H1 (cell line): ENCODE measurements at regions of chr1 and their contacts with region 1.

Region 1: DNA sequence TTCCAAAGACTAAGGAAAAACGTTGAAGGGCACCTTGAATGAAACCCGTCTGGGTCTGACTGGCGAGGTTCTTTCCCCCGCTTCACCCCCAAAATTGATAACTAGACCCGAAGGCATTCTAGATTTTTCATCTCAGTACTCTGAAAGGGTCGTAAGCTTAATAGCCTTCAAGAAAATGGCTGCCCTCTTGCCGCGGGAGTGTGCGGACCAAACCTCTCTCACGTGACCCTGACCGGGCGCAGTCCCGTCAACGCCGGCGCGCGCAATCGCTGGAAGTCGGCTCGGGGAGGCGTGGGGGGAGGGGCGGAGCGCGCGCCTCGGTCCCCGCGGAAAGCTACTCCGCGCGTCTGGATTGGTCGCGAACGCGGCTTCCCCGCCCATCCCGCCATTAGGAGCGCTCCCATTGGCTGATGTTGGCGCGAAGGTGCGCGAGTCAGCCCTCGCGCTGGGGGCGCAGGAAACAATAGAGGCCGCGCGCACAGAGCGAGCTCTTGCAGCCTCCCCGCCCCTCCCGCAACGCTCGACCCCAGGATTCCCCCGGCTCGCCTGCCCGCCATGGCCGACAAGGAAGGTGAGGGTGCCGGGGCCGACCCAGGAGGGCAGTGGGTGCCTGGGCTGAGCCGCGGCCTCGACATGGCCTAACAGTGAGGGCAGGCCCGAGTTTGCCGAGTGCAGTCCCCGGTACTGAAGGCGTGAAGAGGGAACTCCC is at the start of gene RBBP4:
- DNase-seq: peak; percentile 94 to 99
- H3K4me3 ChIP-seq: peak within 1 kb of the TSS; percentile 99
- H3K27ac ChIP-seq: peak within 1 kb of the TSS; percentile 99
- H3K4me1 ChIP-seq: peaks cover 0 to 5% (median 1%) of the 10 kb centered on the region in 4 experiments; a peak in 4 of 7 replicates
- H3K27me3 ChIP-seq: no peaks in the 10 kb centered on the region
- CTCF ChIP-seq: no peak
- EP300 ChIP-seq: no peak
- POLR2A ChIP-seq: no peak; a peak in 1 of 3 replicates
- RAD21 ChIP-seq: no peak
- total RNA-seq, gene RBBP4: 397 and 402 TPM in 2 replicates

Region 2: GRCh38 chr1:32394141-32394889 is 256.6 kb before region 1 on chr1 and contains the start of gene BSDC1:
- CTCF ChIA-PET with region 1: no interaction called
- POLR2A ChIA-PET with region 1: interaction called, 13 read pairs
- DNase-seq: peak; percentile 97 to 98
- H3K4me3 ChIP-seq: peak within 1 kb of the TSS; percentile 79 to 100 (median 94)
- H3K27ac ChIP-seq: peak within 1 kb of the TSS; percentile 95
- H3K4me1 ChIP-seq: peaks cover 0 to 8% (median 3%) of the 10 kb centered on the region in 4 experiments; a peak in 4 of 7 replicates
- H3K27me3 ChIP-seq: no peaks in the 10 kb centered on the region
- CTCF ChIP-seq: no peak
- EP300 ChIP-seq: no peak
- POLR2A ChIP-seq: peak; percentile 77 to 97
- RAD21 ChIP-seq: no peak
- total RNA-seq, gene BSDC1: 40.7 and 42.9 TPM in 2 replicates

Region 3: GRCh38 chr1:32538887-32539583 is 111.9 kb before region 1 on chr1 and contains the start of gene ZBTB8A:
- CTCF ChIA-PET with region 1: no interaction called
- POLR2A ChIA-PET with region 1: interaction called, 25 read pairs
- DNase-seq: peak; percentile 15 to 73
- H3K4me3 ChIP-seq: peak within 1 kb of the TSS; percentile 74 to 95 (median 78)
- H3K27ac ChIP-seq: peak within 1 kb of the TSS; percentile 83; the same call in 1 of the 2 replicates
- H3K4me1 ChIP-seq: peaks cover 0 to 2% (median 1%) of the 10 kb centered on the region in 4 experiments; a peak in 5 of 7 replicates
- H3K27me3 ChIP-seq: no peaks in the 10 kb centered on the region; a peak in 1 of 7 replicates
- CTCF ChIP-seq: no peak
- EP300 ChIP-seq: no peak
- POLR2A ChIP-seq: peak in 1 of 2 experiments; percentile 58; a peak in 1 of 3 replicates
- RAD21 ChIP-seq: no peak
- total RNA-seq, gene ZBTB8A: 8.9 and 10.4 TPM in 2 replicates

Region 4: GRCh38 chr1:32622806-32623681 is 27.9 kb before region 1 on chr1:
- CTCF ChIA-PET with region 1: no interaction called
- POLR2A ChIA-PET with region 1: interaction called, 12 read pairs
- DNase-seq: no peak
- H3K4me3 ChIP-seq: no peak overlapping the region
- H3K27ac ChIP-seq: no peak overlapping the region
- H3K4me1 ChIP-seq: no peaks in the 10 kb centered on the region
- H3K27me3 ChIP-seq: no peaks in the 10 kb centered on the region
- CTCF ChIP-seq: no peak
- EP300 ChIP-seq: no peak
- POLR2A ChIP-seq: no peak
- RAD21 ChIP-seq: no peak

Region 5: GRCh38 chr1:32666901-32667566 is 16.1 kb after region 1 on chr1:
- CTCF ChIA-PET with region 1: no interaction called
- POLR2A ChIA-PET with region 1: interaction called, 118 read pairs
- DNase-seq: no peak
- H3K4me3 ChIP-seq: no peak overlapping the region
- H3K27ac ChIP-seq: no peak overlapping the region
- H3K4me1 ChIP-seq: no peaks in the 10 kb centered on the region
- H3K27me3 ChIP-seq: no peaks in the 10 kb centered on the region
- CTCF ChIP-seq: no peak
- EP300 ChIP-seq: no peak
- POLR2A ChIP-seq: 0 out of 3 replicates have a peak, but pooled peaks of 1 of the 2 experiments have one; percentile 8
- RAD21 ChIP-seq: no peak

Region 6: DNA sequence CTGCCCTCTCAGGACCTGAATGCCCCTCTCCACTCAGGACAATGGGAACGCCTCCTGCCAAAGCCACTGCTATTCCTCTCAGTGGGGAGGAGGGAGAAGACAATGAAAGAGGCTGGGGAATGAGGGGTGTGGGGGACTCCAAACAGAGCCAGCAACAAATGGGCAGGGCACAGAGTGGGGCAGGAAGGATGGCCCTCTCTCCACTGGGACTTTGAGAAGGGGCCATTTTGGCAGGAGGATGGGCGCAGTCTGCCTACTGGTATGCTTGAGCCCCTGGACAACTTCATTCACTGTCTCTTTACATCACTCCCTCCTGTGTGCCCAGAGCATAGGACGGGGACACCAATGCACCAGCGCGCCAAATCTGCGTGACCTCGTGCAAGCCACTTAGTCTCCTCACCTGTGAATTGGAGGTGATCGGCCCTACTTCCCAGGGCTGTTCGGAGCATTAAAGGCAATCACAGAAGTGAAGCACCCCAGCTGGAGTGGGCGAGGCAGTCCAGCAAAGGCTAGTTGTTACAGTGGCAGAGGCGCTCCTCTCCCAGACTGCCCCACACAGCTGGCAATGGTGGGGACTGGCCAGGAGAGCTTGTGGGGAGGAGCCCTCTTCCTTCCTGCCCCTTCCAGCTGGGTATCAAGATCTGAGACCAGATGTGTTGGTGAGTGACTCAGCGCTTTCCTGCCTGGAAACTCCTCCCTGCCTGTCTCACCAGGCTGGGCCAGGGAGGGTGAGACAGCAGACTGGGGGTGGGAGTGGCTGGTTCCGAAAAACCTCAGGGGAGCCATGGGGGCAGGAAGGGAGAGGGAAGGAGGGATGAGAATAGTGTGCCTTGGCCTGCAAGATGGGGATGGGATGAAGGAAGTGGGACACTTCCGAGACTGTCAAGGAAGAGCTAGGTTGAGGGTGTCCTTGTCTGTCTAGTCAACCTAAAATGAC is 74.0 kb after region 1 on chr1:
- CTCF ChIA-PET with region 1: no interaction called
- POLR2A ChIA-PET with region 1: no interaction called
- DNase-seq: peak in 1 of 2 experiments; percentile 56
- H3K4me3 ChIP-seq: no peak overlapping the region
- H3K27ac ChIP-seq: peak overlapping the region; percentile 49; the same call in 1 of the 2 replicates
- H3K4me1 ChIP-seq: peaks cover 3 to 13% (median 13%) of the 10 kb centered on the region in 4 experiments
- H3K27me3 ChIP-seq: no peaks in the 10 kb centered on the region; a peak in 1 of 7 replicates
- CTCF ChIP-seq: no peak
- EP300 ChIP-seq: no peak
- POLR2A ChIP-seq: 0 out of 3 replicates have a peak, but pooled peaks of 1 of the 2 experiments have one; percentile 23
- RAD21 ChIP-seq: no peak

Region 7: DNA sequence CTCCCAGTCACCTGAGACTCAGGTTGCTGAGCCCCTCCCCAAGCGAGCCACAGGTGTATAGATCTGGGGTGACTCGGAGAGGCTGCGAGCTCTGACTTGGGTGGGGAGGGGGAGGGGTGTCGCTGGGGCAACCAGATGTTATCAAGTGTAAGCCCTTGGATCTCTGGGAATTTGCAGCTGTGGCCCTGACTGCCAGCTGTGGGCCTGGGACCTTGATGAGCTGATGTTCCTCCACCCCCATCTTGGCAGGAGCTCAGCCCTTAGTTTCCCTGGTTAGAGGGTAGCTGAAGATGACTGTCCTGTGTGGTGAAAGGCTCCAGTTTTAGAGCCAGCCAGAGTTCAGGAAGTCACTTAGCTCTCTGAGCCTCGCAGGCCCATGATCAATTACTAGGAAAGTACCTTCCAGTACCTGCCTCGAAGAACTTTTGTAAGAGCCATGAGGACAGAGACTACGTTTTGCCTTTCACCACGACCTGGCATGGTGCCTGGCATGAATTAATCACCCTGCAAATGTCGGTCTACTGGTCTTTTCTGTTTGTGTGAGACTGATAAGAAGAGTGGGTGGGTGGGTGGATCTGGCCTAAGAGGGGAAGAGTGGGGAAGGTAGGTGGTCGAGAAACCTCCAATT is 110.5 kb after region 1 on chr1:
- CTCF ChIA-PET with region 1: no interaction called
- POLR2A ChIA-PET with region 1: interaction called, 13 read pairs
- DNase-seq: peak in 1 of 2 experiments; percentile 54
- H3K4me3 ChIP-seq: peak overlapping the region in 2 of 4 experiments; percentile 12 to 51; a peak in 2 of 8 replicates
- H3K27ac ChIP-seq: peak overlapping the region; percentile 87
- H3K4me1 ChIP-seq: peaks cover 35 to 60% (median 46%) of the 10 kb centered on the region in 4 experiments
- H3K27me3 ChIP-seq: no peaks in the 10 kb centered on the region
- CTCF ChIP-seq: 0 out of 4 replicates have a peak, but pooled peaks of 1 of the 3 experiments have one; percentile 1
- EP300 ChIP-seq: 0 out of 3 replicates have a peak, but pooled peaks of 1 of the 2 experiments have one; percentile 50
- POLR2A ChIP-seq: no peak
- RAD21 ChIP-seq: peak in 1 of 2 experiments; percentile 15; a peak in 2 of 4 replicates